B cell (primary cell): ENCODE measurements at regions of chr18 and their contacts with region 1.

Region 1: DNA sequence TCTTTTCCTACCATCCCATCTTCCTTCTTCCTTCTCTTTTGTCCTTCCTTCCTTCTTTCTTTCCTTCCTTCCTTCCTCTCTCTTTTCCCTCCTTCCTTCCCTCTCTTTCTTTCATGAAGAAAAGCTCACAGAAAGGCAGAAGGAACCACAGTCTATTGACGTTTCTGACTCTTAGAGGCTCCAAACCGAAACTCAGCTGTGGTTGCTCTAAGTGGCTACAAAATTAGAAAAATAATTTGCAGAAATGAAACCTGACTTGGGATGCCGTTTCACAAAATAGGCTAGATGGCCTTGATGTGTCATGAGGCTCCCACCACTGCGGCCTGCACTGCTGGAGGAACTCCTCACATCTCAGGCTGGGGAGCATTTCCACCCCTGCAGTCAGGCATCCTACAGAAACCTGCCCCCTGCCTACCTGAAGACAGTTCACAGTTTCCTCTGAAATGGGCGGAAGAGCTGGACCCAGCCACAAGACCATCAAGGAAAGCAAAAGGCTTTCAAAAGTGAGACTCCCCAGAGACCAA is 165.6 kb downstream of the SMAD7 start:
- DNase-seq: peak; percentile 86
- ATAC-seq: peak; percentile 91
- H3K4me3 ChIP-seq: peak overlapping the region in 1 of 5 experiments; percentile 15
- H3K4me3 Mint-ChIP-seq: peak overlapping the region; percentile 50
- H3K27ac ChIP-seq: peak overlapping the region; percentile 44 to 70
- H3K27ac Mint-ChIP-seq: peak overlapping the region; percentile 64
- H3K4me1 ChIP-seq: peaks cover 57 to 70% of the 10 kb centered on the region in 2 donors
- H3K4me1 Mint-ChIP-seq: peaks cover 57% of the 10 kb centered on the region
- H3K27me3 ChIP-seq: no peaks in the 10 kb centered on the region
- H3K27me3 Mint-ChIP-seq: no peaks in the 10 kb centered on the region
- CTCF ChIP-seq: no peak

Region 2: GRCh38 chr18:48687346-48688042 is 97.7 kb before region 1 on chr18:
- CTCF ChIA-PET with region 1: no interaction called
- POLR2A ChIA-PET with region 1: no interaction called
- intact Hi-C with region 1: no loop called
- DNase-seq: no peak
- ATAC-seq: no peak
- H3K4me3 ChIP-seq: no peak overlapping the region
- H3K4me3 Mint-ChIP-seq: no peak overlapping the region
- H3K27ac ChIP-seq: no peak overlapping the region
- H3K27ac Mint-ChIP-seq: no peak overlapping the region
- H3K4me1 ChIP-seq: no peaks in the 10 kb centered on the region
- H3K4me1 Mint-ChIP-seq: no peaks in the 10 kb centered on the region
- H3K27me3 ChIP-seq: no peaks in the 10 kb centered on the region
- H3K27me3 Mint-ChIP-seq: no peaks in the 10 kb centered on the region
- CTCF ChIP-seq: no peak

Region 3: DNA sequence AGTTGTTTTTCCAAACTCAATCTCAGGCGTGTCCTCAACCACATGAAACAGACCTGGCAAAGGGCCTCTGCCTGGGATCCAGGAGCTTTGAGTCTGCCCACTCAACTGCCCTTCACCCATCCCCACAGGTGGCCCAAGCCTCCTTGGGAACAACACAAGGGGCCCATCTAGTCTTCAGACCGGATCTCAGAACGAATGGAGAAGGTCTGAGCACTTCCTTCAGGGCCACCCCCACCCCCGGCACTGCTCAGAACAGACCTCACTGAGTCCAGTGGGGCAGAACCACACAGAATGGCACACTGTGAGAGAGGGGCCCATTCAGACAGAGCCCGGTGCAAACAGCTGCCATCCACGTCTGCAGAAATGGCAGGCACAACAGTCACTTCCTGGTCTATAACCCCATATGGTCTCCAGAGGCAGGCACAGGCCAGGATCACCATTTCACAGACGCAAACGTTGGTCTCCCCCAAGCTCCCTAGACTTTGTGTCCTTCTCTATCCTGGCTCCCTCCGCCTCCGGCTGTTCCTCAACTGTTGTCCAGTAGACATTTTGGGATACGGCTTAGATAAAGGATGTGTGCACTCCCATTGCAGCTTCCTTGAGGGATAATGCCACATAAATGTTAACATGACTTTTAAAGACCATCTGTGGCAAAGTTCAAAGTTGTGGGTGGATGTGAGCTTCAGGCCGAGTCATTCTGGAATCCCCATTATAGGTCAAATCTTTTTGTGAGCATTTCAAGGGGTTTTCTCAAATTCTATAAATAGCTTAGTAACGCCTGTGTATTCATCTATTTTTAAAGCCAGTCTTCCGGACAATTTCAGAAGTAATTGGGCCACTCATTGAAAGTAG is 15.9 kb after region 1 on chr18:
- CTCF ChIA-PET with region 1: interaction called, 3 read pairs
- POLR2A ChIA-PET with region 1: interaction called, 5 read pairs
- intact Hi-C with region 1: loop called (anchors 1 kb)
- DNase-seq: peak; percentile 37
- ATAC-seq: peak; percentile 72
- H3K4me3 ChIP-seq: no peak overlapping the region
- H3K4me3 Mint-ChIP-seq: peak overlapping the region; percentile 63
- H3K27ac ChIP-seq: no peak overlapping the region
- H3K27ac Mint-ChIP-seq: peak overlapping the region; percentile 8
- H3K4me1 ChIP-seq: peaks cover 19 to 29% of the 10 kb centered on the region in 2 donors
- H3K4me1 Mint-ChIP-seq: peaks cover 43% of the 10 kb centered on the region
- H3K27me3 ChIP-seq: no peaks in the 10 kb centered on the region
- H3K27me3 Mint-ChIP-seq: no peaks in the 10 kb centered on the region
- CTCF ChIP-seq: no peak

Region 4: GRCh38 chr18:48834413-48835031 is 49.4 kb after region 1 on chr18:
- CTCF ChIA-PET with region 1: no interaction called
- POLR2A ChIA-PET with region 1: no interaction called
- intact Hi-C with region 1: loop called (anchors 2 kb)
- DNase-seq: peak; percentile 60
- ATAC-seq: peak; percentile 66
- H3K4me3 ChIP-seq: peak overlapping the region in 3 of 5 experiments; percentile 2 to 37 (median 29)
- H3K4me3 Mint-ChIP-seq: peak overlapping the region; percentile 83
- H3K27ac ChIP-seq: peak overlapping the region in 1 of 2 donors; percentile 32
- H3K27ac Mint-ChIP-seq: peak overlapping the region; percentile 74
- H3K4me1 ChIP-seq: peaks cover 32 to 36% of the 10 kb centered on the region in 2 donors
- H3K4me1 Mint-ChIP-seq: peaks cover 41% of the 10 kb centered on the region
- H3K27me3 ChIP-seq: peaks cover 0 to 3% (median 0%) of the 10 kb centered on the region in 4 experiments
- H3K27me3 Mint-ChIP-seq: no peaks in the 10 kb centered on the region
- CTCF ChIP-seq: no peak

Region 5: GRCh38 chr18:48868468-48869466 is 83.6 kb after region 1 on chr18:
- CTCF ChIA-PET with region 1: no interaction called
- POLR2A ChIA-PET with region 1: no interaction called
- intact Hi-C with region 1: loop called (anchors 1 kb)
- DNase-seq: peak; percentile 94
- ATAC-seq: peak; percentile 94
- H3K4me3 ChIP-seq: no peak overlapping the region
- H3K4me3 Mint-ChIP-seq: peak overlapping the region; percentile 51
- H3K27ac ChIP-seq: peak overlapping the region; percentile 67 to 78
- H3K27ac Mint-ChIP-seq: peak overlapping the region; percentile 94
- H3K4me1 ChIP-seq: peaks cover 17 to 26% of the 10 kb centered on the region in 2 donors
- H3K4me1 Mint-ChIP-seq: peaks cover 17% of the 10 kb centered on the region
- H3K27me3 ChIP-seq: no peaks in the 10 kb centered on the region
- H3K27me3 Mint-ChIP-seq: no peaks in the 10 kb centered on the region
- CTCF ChIP-seq: no peak

Region 6: GRCh38 chr18:48928787-48929186 is 143.6 kb after region 1 on chr18:
- CTCF ChIA-PET with region 1: no interaction called
- POLR2A ChIA-PET with region 1: interaction called, 4 read pairs
- intact Hi-C with region 1: loop called (anchors 1 kb)
- DNase-seq: peak; percentile 91
- ATAC-seq: peak; percentile 92
- H3K4me3 ChIP-seq: peak overlapping the region in 4 of 5 experiments; percentile 13 to 41 (median 28)
- H3K4me3 Mint-ChIP-seq: peak overlapping the region; percentile 64
- H3K27ac ChIP-seq: peak overlapping the region; percentile 41 to 93
- H3K27ac Mint-ChIP-seq: peak overlapping the region; percentile 90
- H3K4me1 ChIP-seq: peaks cover 71 to 89% of the 10 kb centered on the region in 2 donors
- H3K4me1 Mint-ChIP-seq: peaks cover 91% of the 10 kb centered on the region
- H3K27me3 ChIP-seq: no peaks in the 10 kb centered on the region
- H3K27me3 Mint-ChIP-seq: no peaks in the 10 kb centered on the region
- CTCF ChIP-seq: no peak

Region 7: DNA sequence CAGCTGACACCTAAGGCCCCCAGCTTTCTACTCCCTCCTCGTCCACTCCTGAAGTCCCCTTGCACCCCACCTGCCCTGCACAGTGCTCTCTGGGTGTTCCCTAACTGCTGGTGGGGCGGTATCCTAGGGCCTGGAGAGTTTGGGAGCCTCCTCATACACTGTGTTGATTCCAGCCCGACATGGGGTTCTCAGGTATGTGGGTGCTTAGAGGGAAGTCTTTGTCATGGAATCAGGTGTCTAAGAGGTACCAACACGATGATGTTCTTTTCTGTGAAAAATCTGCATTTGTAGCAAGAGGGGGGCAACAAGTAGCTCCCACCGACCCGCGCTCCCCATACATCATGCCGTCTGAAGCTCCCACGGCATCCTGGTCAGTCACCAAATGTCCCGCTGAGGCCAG is 262.4 kb after region 1 on chr18:
- CTCF ChIA-PET with region 1: interaction called, 5 read pairs
- POLR2A ChIA-PET with region 1: interaction called, 11 read pairs
- intact Hi-C with region 1: no loop called
- DNase-seq: no peak
- ATAC-seq: no peak
- H3K4me3 ChIP-seq: no peak overlapping the region
- H3K4me3 Mint-ChIP-seq: no peak overlapping the region
- H3K27ac ChIP-seq: no peak overlapping the region
- H3K27ac Mint-ChIP-seq: no peak overlapping the region
- H3K4me1 ChIP-seq: peaks cover 2 to 6% of the 10 kb centered on the region in 2 donors
- H3K4me1 Mint-ChIP-seq: peaks cover 10% of the 10 kb centered on the region
- H3K27me3 ChIP-seq: no peaks in the 10 kb centered on the region
- H3K27me3 Mint-ChIP-seq: no peaks in the 10 kb centered on the region
- CTCF ChIP-seq: no peak